ENCODE measurements at regions of chr19 and their contacts with region 1.

Region 1: GRCh38 chr19:14496028-14496833 is at the start of gene GIPC1:
- DNase-seq: peak; percentile 85
- H3K4me3 Mint-ChIP-seq: peak within 1 kb of the TSS; percentile 77
- H3K27ac Mint-ChIP-seq: peak within 1 kb of the TSS; percentile 26
- H3K4me1 Mint-ChIP-seq: peaks cover 17% of the 10 kb centered on the region
- H3K27me3 Mint-ChIP-seq: no peaks in the 10 kb centered on the region
- total RNA-seq, gene GIPC1: 15.4 to 16.5 TPM

Region 2: GRCh38 chr19:14479975-14480699 is 16.1 kb before region 1 on chr19:
- CTCF ChIA-PET with region 1: interaction called, 20 read pairs
- intact Hi-C with region 1: no loop called
- DNase-seq: peak; percentile 74
- H3K4me3 Mint-ChIP-seq: no peak overlapping the region
- H3K27ac Mint-ChIP-seq: no peak overlapping the region
- H3K4me1 Mint-ChIP-seq: peaks cover 12% of the 10 kb centered on the region
- H3K27me3 Mint-ChIP-seq: peaks cover 3% of the 10 kb centered on the region

Measured in activated naive CD4-positive, alpha-beta T cell treated with anti-CD3 and anti-CD28 coated beads for 36 hours (primary cell).